ENCODE measurements at regions of chr18 and their contacts with region 1.

Region 1: GRCh38 chr18:59402432-59403090 is 43.5 kb upstream of the LMAN1 start:
- DNase-seq: peak; percentile 88
- H3K4me3 ChIP-seq: peak overlapping the region in 1 of 2 experiments; percentile 57; a peak in 1 of 4 replicates
- H3K27ac ChIP-seq: no peak overlapping the region
- H3K4me1 ChIP-seq: no peaks in the 10 kb centered on the region; a peak in 1 of 4 replicates
- H3K27me3 ChIP-seq: no peaks in the 10 kb centered on the region
- CTCF ChIP-seq: peak; percentile 94
- EP300 ChIP-seq: no peak
- RAD21 ChIP-seq: peak; percentile 99

Region 2: DNA sequence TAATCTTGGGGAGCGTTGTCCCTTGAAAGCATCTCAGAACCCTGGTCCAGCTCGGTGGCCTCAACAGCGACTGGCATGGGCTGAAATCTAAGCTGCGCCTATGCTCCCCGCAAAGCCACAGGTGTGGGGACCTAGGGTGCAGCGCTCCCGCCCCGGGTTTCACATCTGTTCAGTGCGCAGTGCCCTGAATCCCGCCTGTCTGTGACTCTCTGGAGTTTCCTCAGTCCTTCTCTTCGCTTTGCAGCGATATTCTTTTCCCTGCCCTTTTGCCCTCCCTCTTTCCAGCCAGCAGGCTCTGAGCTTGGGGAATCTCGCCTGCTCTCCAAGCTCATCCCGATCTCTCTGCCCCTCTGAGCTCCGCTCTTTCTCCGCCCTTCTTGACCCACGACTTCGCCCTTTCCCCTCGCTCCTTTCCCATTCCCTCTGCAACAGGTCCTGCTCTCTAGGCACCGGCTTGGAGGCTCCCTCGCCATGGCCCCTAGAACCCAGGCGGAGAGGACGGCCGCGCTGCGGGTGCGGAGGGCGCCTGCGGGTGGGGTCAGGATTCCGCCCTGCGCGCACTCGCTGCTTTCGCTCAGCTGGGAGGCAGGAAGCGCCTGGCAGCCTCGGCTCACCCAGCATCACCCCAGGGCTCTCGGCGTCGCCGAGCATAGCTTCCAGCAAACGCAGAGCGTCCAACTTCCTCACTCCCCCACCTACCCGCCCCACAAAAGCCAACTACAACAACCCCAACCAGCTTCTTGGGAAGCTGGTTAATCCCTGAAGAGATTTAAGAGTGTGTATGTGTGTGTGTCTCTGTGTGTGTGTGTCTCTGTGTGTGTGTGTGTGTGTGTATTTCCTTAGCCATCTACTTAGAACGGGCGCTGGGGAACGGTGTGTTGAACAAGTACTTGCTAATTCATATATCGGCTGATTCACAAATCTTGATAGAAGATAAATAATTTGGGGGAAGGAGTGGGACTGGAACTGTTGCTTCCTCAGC is 181.5 kb before region 1 on chr18:
- CTCF ChIA-PET with region 1: interaction called, 16 read pairs
- POLR2A ChIA-PET with region 1: no interaction called
- DNase-seq: peak; percentile 56
- H3K4me3 ChIP-seq: peak overlapping the region; percentile 32 to 65
- H3K27ac ChIP-seq: no peak overlapping the region
- H3K4me1 ChIP-seq: peaks cover 4 to 5% of the 10 kb centered on the region in 2 experiments; a peak in 2 of 4 replicates
- H3K27me3 ChIP-seq: peaks cover 47% of the 10 kb centered on the region
- CTCF ChIP-seq: no peak
- EP300 ChIP-seq: no peak
- RAD21 ChIP-seq: no peak

Region 3: DNA sequence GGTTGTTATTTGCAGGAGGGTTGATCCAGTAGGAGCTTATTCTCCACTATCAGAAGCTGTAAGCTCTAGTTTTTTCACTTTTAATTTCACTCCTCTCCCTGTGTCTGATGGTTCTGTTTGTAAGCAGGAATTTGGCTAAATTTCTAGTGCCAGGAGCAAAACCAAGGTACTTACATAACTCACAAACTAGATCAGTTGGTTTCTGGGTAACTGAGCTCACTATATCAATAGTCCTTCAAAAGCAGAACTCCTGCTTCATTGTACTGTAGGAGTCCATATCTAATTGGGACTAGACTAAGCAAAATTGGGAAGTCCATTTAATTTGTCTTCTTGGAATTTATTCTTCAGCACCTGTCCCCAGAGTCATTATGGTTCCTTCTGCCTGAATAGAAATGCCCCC is 109.2 kb before region 1 on chr18:
- CTCF ChIA-PET with region 1: interaction called, 15 read pairs
- POLR2A ChIA-PET with region 1: no interaction called
- DNase-seq: no peak
- H3K4me3 ChIP-seq: no peak overlapping the region
- H3K27ac ChIP-seq: no peak overlapping the region
- H3K4me1 ChIP-seq: no peaks in the 10 kb centered on the region
- H3K27me3 ChIP-seq: peaks cover 19% of the 10 kb centered on the region; the same call in 1 of the 2 replicates
- CTCF ChIP-seq: no peak
- EP300 ChIP-seq: no peak
- RAD21 ChIP-seq: no peak

Region 4: GRCh38 chr18:59323931-59324622 is 78.5 kb before region 1 on chr18:
- CTCF ChIA-PET with region 1: interaction called, 40 read pairs
- POLR2A ChIA-PET with region 1: no interaction called
- DNase-seq: no peak
- H3K4me3 ChIP-seq: no peak overlapping the region
- H3K27ac ChIP-seq: no peak overlapping the region
- H3K4me1 ChIP-seq: no peaks in the 10 kb centered on the region
- H3K27me3 ChIP-seq: no peaks in the 10 kb centered on the region
- CTCF ChIP-seq: no peak
- EP300 ChIP-seq: no peak
- RAD21 ChIP-seq: no peak

Region 5: DNA sequence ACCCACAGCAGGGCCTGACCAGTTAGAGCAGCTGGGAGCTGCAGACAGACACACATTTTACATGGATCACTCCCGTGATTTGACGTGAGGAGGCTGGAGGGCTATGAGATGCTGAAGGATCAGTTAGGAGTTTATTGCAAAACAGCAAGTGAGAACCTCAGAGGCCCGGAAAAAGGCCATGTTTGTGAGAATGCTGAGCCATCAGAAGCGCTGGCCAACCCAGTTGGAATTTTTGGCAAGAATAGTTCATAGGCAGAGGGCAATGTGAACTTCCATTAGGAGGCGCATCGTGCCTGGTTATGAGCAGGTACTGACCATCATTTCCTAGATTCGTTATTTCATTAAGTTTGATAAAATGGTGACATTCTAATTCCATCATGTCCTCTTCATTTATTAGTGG is 20.2 kb before region 1 on chr18:
- CTCF ChIA-PET with region 1: interaction called, 24 read pairs
- POLR2A ChIA-PET with region 1: no interaction called
- DNase-seq: no peak
- H3K4me3 ChIP-seq: no peak overlapping the region
- H3K27ac ChIP-seq: no peak overlapping the region
- H3K4me1 ChIP-seq: no peaks in the 10 kb centered on the region; a peak in 2 of 4 replicates
- H3K27me3 ChIP-seq: peaks cover 6% of the 10 kb centered on the region; the same call in 1 of the 2 replicates
- CTCF ChIP-seq: no peak
- EP300 ChIP-seq: no peak
- RAD21 ChIP-seq: no peak

Region 6: DNA sequence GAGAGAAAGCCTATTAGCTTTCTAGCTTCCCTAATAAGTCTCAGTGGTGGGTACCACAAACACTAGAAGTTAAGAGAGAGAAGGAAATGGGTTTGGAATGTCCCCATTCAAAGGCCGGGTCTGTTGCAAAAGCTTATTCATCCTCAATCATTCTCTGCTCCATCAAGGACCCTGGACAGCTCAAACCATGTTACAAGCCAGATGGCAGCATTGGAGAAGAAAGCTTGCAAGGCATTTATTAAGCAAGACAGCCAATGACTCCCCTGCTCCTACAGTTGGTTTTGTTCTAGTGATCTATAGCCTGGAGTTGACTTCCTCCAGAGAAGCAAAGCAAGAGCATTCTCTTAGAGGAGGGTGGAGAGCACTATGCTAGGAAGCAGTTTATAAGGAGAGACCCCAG is 43.5 kb after region 1 on chr18:
- CTCF ChIA-PET with region 1: interaction called, 10 read pairs
- POLR2A ChIA-PET with region 1: no interaction called
- DNase-seq: no peak
- H3K4me3 ChIP-seq: no peak overlapping the region
- H3K27ac ChIP-seq: no peak overlapping the region
- H3K4me1 ChIP-seq: peaks cover 0 to 3% of the 10 kb centered on the region in 2 experiments; a peak in 2 of 4 replicates
- H3K27me3 ChIP-seq: no peaks in the 10 kb centered on the region
- CTCF ChIP-seq: no peak
- EP300 ChIP-seq: no peak
- RAD21 ChIP-seq: no peak

Region 7: DNA sequence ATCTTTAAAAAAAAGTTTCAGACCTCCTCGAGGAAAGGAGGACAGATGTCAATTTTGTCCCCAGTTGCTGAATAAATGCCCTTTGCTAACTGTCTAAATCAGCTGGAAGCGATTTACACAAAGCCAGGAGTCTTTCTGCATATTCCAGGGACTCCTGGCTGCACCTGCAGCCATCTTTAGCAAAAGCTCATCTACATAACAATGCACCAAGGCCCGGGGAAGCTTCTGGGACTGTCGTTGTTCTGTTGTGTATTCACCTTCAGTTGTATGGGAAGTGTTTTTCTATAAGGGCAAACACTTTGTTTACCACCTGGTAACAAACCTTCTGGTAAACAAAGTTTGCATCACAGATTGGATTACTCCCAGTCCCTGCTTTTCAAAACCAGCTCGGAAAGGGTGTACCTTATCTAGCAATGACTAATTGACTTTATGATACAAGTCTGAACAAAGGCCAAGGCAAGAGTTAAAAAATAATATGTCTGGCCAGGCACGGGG is 461.6 kb after region 1 on chr18:
- CTCF ChIA-PET with region 1: no interaction called
- POLR2A ChIA-PET with region 1: no interaction called
- DNase-seq: no peak
- H3K4me3 ChIP-seq: no peak overlapping the region
- H3K27ac ChIP-seq: no peak overlapping the region
- H3K4me1 ChIP-seq: no peaks in the 10 kb centered on the region
- H3K27me3 ChIP-seq: no peaks in the 10 kb centered on the region
- CTCF ChIP-seq: no peak
- EP300 ChIP-seq: no peak
- RAD21 ChIP-seq: no peak